Activated CD8-positive, alpha-beta T cell treated with anti-CD3 and anti-CD28 coated beads for 36 hours (primary cell): ENCODE measurements at regions of chr19 and their contacts with region 1.

Region 1: DNA sequence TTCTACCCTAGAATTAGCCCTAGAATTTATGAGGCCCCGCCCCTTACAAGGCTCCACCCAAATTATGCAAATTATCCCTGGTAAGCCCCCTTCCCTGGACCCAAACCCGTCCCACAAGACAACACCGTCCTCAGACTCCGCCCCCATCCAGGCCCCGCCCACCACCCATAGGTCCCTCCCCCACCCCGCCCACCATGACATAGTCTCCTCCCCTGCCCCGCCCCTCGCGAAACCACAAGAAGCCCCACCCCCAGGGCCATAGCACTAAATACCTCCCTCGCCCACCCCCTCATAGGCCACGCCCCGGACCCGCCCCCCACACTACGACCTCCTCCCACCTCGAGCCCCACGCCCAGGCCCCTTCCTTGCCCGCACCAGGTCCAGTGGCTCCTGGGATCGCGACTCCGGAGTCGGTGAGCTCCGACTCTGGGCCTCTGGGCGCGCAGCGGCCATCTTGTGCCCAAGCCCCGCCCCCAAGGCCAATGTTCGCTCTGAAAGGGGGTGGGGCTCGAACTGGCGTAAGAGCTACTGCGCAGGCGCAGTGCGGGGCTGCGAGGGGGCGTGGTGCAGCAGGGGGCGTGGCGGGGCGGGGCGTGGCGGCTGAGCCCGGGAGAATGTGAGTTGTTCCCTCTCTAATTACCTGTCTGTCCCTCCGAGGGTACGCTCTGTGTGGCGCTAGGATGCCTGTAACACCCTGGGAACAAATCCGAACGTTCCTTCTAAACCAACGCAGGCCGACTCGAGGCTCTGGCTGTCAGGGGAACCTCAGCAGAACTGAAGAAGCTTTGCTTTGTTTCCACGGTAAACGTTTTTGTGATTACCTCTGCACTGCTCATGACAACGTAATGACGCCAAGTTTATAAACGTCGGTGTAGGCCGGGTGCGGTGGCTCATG is at the start of gene ZNF784:
- DNase-seq: peak; percentile 93
- ATAC-seq: peak; percentile 79
- H3K4me3 Mint-ChIP-seq: peak within 1 kb of the TSS; percentile 82
- H3K27ac Mint-ChIP-seq: peak within 1 kb of the TSS; percentile 97
- H3K4me1 Mint-ChIP-seq: peaks cover 51% of the 10 kb centered on the region
- H3K27me3 Mint-ChIP-seq: peaks cover 6% of the 10 kb centered on the region
- CTCF ChIP-seq: no peak
- total RNA-seq, gene ZNF784: 3.6 to 3.7 TPM

Region 2: GRCh38 chr19:55516878-55517620 is 107.3 kb before region 1 on chr19:
- CTCF ChIA-PET with region 1: interaction called, 5 read pairs
- POLR2A ChIA-PET with region 1: interaction called, 3 read pairs
- intact Hi-C with region 1: loop called (anchors 5 kb)
- DNase-seq: peak; percentile 94
- ATAC-seq: peak; percentile 100
- H3K4me3 Mint-ChIP-seq: peak overlapping the region; percentile 55
- H3K27ac Mint-ChIP-seq: peak overlapping the region; percentile 51
- H3K4me1 Mint-ChIP-seq: peaks cover 3% of the 10 kb centered on the region
- H3K27me3 Mint-ChIP-seq: no peaks in the 10 kb centered on the region
- CTCF ChIP-seq: peak; percentile 66

Region 3: GRCh38 chr19:55613930-55614710 is 10.2 kb before region 1 on chr19:
- CTCF ChIA-PET with region 1: no interaction called
- POLR2A ChIA-PET with region 1: no interaction called
- intact Hi-C with region 1: no loop called
- DNase-seq: no peak
- ATAC-seq: no peak
- H3K4me3 Mint-ChIP-seq: no peak overlapping the region
- H3K27ac Mint-ChIP-seq: no peak overlapping the region
- H3K4me1 Mint-ChIP-seq: peaks cover 26% of the 10 kb centered on the region
- H3K27me3 Mint-ChIP-seq: no peaks in the 10 kb centered on the region
- CTCF ChIP-seq: no peak